MCF 10A (cell line): ENCODE measurements at regions of chr4 and their contacts with region 1.

Region 1: GRCh38 chr4:22389240-22389870 is 126.5 kb downstream of the ADGRA3 start:
- DNase-seq: peak; percentile 68
- H3K4me3 Mint-ChIP-seq: no peak overlapping the region
- H3K27ac Mint-ChIP-seq: no peak overlapping the region
- H3K4me1 Mint-ChIP-seq: peaks cover 6% of the 10 kb centered on the region
- H3K27me3 Mint-ChIP-seq: no peaks in the 10 kb centered on the region
- CTCF ChIP-seq: peak; percentile 71

Region 2: GRCh38 chr4:21802406-21802805 is 586.9 kb before region 1 on chr4:
- CTCF ChIA-PET with region 1: interaction called, 16 read pairs
- POLR2A ChIA-PET with region 1: no interaction called
- intact Hi-C with region 1: no loop called
- DNase-seq: peak; percentile 29
- H3K4me3 Mint-ChIP-seq: no peak overlapping the region
- H3K27ac Mint-ChIP-seq: peak overlapping the region; percentile 73
- H3K4me1 Mint-ChIP-seq: peaks cover 23% of the 10 kb centered on the region
- H3K27me3 Mint-ChIP-seq: no peaks in the 10 kb centered on the region
- CTCF ChIP-seq: no peak

Region 3: GRCh38 chr4:22356987-22357596 is 32.3 kb before region 1 on chr4:
- CTCF ChIA-PET with region 1: interaction called, 32 read pairs
- POLR2A ChIA-PET with region 1: interaction called, 4 read pairs
- intact Hi-C with region 1: no loop called
- DNase-seq: peak; percentile 28
- H3K4me3 Mint-ChIP-seq: no peak overlapping the region
- H3K27ac Mint-ChIP-seq: no peak overlapping the region
- H3K4me1 Mint-ChIP-seq: no peaks in the 10 kb centered on the region
- H3K27me3 Mint-ChIP-seq: no peaks in the 10 kb centered on the region
- CTCF ChIP-seq: peak; percentile 32

Region 4: GRCh38 chr4:22410645-22411247 is 21.4 kb after region 1 on chr4:
- CTCF ChIA-PET with region 1: interaction called, 11 read pairs
- POLR2A ChIA-PET with region 1: no interaction called
- intact Hi-C with region 1: no loop called
- DNase-seq: peak; percentile 22
- H3K4me3 Mint-ChIP-seq: no peak overlapping the region
- H3K27ac Mint-ChIP-seq: no peak overlapping the region
- H3K4me1 Mint-ChIP-seq: no peaks in the 10 kb centered on the region
- H3K27me3 Mint-ChIP-seq: no peaks in the 10 kb centered on the region
- CTCF ChIP-seq: peak; percentile 41